ENCODE measurements at regions of chr17 and their contacts with region 1.

Region 1: GRCh38 chr17:34199932-34200534 is 55.1 kb upstream of the CCL2 start:
- DNase-seq: peak; percentile 96
- H3K4me3 ChIP-seq: no peak overlapping the region
- H3K27ac ChIP-seq: no peak overlapping the region
- H3K4me1 ChIP-seq: peaks cover 3 to 11% (median 4%) of the 10 kb centered on the region in 4 donors
- H3K27me3 ChIP-seq: peaks cover 0 to 30% (median 0%) of the 10 kb centered on the region in 4 donors
- CTCF ChIP-seq: peak in 2 of 3 experiments; percentile 100
- EP300 ChIP-seq: no peak
- POLR2A ChIP-seq: no peak

Region 2: DNA sequence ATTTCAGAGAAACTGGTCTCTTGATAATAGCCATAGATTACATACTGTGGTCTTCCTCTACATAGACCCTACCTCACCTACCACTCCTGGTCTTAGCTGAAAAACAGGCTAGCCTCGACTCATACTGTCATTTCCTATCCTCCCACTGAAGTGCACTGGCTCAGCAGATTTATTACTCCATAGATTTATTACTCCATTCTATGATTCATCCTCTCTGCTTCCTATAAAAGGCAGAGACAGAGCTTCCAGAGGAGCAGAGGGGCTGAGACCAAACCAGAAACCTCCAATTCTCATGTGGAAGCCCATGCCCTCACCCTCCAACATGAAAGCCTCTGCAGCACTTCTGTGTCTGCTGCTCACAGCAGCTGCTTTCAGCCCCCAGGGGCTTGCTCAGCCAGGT is 69.9 kb after region 1 on chr17 and contains the start of gene CCL7:
- intact Hi-C with region 1: loop called (anchors 10 kb)
- DNase-seq: no peak
- H3K4me3 ChIP-seq: no peak within 1 kb of the TSS
- H3K27ac ChIP-seq: no peak within 1 kb of the TSS
- H3K4me1 ChIP-seq: peaks cover 0 to 5% (median 0%) of the 10 kb centered on the region in 4 donors
- H3K27me3 ChIP-seq: no peaks in the 10 kb centered on the region
- CTCF ChIP-seq: no peak
- EP300 ChIP-seq: no peak
- POLR2A ChIP-seq: no peak
- total RNA-seq, gene CCL7: 0.83 TPM in 1 of 4 donors, not detected in the others

Region 3: GRCh38 chr17:34306466-34306865 is 106.4 kb after region 1 on chr17:
- intact Hi-C with region 1: loop called (anchors 1 kb)
- DNase-seq: peak; percentile 89
- H3K4me3 ChIP-seq: no peak overlapping the region
- H3K27ac ChIP-seq: no peak overlapping the region
- H3K4me1 ChIP-seq: peaks cover 22 to 31% (median 24%) of the 10 kb centered on the region in 4 donors
- H3K27me3 ChIP-seq: no peaks in the 10 kb centered on the region
- CTCF ChIP-seq: peak; percentile 47 to 71 (median 56)
- EP300 ChIP-seq: no peak
- POLR2A ChIP-seq: no peak

Region 4: DNA sequence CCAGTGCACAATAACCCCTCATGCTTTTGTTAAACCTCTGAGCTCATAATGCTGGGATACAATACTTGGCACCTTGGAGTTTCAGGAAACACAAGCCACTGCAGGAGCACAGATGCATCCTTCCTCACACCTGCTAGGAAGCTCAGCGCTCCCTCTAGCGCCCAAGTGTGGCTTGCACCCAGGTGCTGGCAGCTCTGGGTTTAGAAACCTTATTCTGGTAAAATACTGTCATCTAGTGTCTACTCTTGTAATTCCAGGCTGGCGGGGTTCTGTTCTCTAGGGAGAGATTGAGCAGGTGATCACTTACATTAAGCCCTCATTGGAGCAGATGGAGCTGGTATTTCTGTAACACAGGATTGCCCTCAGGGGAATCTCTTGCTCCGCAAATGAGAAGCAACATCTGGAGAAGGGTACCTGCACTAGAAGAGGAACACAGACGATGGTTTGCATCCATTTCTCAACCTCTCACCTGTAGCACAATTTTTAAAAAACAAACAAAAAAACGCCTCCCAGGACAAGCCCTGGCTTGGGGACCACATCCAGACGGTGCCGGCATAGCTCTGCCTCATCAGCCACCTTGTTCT is 161.5 kb after region 1 on chr17:
- intact Hi-C with region 1: loop called (anchors 1 kb)
- DNase-seq: peak; percentile 95
- H3K4me3 ChIP-seq: no peak overlapping the region
- H3K27ac ChIP-seq: no peak overlapping the region
- H3K4me1 ChIP-seq: peaks cover 0 to 8% (median 2%) of the 10 kb centered on the region in 4 donors
- H3K27me3 ChIP-seq: peaks cover 0 to 29% (median 0%) of the 10 kb centered on the region in 4 donors
- CTCF ChIP-seq: peak in 2 of 3 experiments; percentile 99 to 100
- EP300 ChIP-seq: no peak
- POLR2A ChIP-seq: no peak